ENCODE measurements at regions of chr4 and their contacts with region 1.

Region 1: DNA sequence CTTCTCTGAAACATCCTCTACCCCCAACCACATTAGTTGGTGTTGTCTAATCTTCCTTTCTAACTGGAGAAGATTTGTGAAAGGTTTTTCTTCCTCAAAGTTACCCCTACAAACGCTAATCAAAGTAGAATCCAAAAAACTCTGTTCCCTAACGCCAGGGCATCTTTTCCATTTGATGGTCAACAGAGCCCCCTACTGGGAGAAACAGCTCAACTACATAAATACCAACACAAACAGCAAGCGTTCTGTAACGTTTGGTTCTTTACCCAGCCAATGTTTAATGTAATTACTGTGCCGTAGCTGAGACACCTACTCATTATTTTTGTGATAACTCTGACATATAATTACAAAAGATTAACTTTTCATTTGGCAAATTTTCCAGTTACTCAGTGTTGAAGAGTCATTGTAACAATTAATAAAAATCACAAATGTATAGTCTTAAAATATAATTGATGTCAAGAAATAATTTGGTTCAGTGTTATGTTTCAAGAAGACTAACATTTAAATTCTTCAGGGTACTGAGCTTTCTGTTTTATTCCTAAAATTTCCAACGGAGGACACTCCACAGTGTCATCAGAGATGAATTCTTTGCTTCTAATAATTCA is 94.9 kb upstream of the TBC1D9 start:
- DNase-seq: peak; percentile 79
- H3K4me3 Mint-ChIP-seq: no peak overlapping the region
- H3K27ac Mint-ChIP-seq: no peak overlapping the region
- H3K4me1 Mint-ChIP-seq: peaks cover 15% of the 10 kb centered on the region
- H3K27me3 Mint-ChIP-seq: no peaks in the 10 kb centered on the region
- CTCF ChIP-seq: peak; percentile 82

Region 2: GRCh38 chr4:140523857-140524742 is 327.0 kb before region 1 on chr4 and contains the start of gene ELMOD2:
- CTCF ChIA-PET with region 1: interaction called, 3 read pairs
- POLR2A ChIA-PET with region 1: no interaction called
- intact Hi-C with region 1: loop called (anchors 5 kb)
- DNase-seq: peak; percentile 97
- H3K4me3 Mint-ChIP-seq: peak within 1 kb of the TSS; percentile 76
- H3K27ac Mint-ChIP-seq: peak within 1 kb of the TSS; percentile 47
- H3K4me1 Mint-ChIP-seq: no peaks in the 10 kb centered on the region
- H3K27me3 Mint-ChIP-seq: no peaks in the 10 kb centered on the region
- CTCF ChIP-seq: peak; percentile 84
- total RNA-seq, gene ELMOD2: 29.2 and 45.0 TPM in 2 replicates

Region 3: DNA sequence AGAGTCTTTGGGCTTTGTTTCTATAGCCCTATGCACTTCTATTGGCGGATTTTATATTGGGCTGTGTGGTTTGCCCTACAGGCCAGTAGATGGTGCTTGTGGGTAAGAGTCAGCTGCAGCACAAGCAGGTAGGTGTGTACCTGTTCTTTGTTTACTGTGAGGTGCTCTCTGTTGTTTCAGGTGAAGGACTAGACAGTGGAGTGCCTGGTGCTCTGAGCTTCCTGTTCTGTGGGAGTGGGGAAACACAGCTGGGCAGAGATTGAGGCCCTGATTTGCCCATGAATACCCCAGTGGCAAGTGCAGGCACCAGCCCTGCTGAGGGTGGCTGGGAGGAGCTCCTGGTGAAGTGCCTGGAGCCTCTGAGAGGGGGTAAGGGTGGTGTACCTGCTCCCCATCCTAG is 256.1 kb before region 1 on chr4:
- CTCF ChIA-PET with region 1: interaction called, 30 read pairs
- POLR2A ChIA-PET with region 1: interaction called, 3 read pairs
- intact Hi-C with region 1: loop called (anchors 1 kb)
- DNase-seq: peak; percentile 61
- H3K4me3 Mint-ChIP-seq: no peak overlapping the region
- H3K27ac Mint-ChIP-seq: no peak overlapping the region
- H3K4me1 Mint-ChIP-seq: no peaks in the 10 kb centered on the region
- H3K27me3 Mint-ChIP-seq: peaks cover 32% of the 10 kb centered on the region
- CTCF ChIP-seq: peak; percentile 70

Region 4: DNA sequence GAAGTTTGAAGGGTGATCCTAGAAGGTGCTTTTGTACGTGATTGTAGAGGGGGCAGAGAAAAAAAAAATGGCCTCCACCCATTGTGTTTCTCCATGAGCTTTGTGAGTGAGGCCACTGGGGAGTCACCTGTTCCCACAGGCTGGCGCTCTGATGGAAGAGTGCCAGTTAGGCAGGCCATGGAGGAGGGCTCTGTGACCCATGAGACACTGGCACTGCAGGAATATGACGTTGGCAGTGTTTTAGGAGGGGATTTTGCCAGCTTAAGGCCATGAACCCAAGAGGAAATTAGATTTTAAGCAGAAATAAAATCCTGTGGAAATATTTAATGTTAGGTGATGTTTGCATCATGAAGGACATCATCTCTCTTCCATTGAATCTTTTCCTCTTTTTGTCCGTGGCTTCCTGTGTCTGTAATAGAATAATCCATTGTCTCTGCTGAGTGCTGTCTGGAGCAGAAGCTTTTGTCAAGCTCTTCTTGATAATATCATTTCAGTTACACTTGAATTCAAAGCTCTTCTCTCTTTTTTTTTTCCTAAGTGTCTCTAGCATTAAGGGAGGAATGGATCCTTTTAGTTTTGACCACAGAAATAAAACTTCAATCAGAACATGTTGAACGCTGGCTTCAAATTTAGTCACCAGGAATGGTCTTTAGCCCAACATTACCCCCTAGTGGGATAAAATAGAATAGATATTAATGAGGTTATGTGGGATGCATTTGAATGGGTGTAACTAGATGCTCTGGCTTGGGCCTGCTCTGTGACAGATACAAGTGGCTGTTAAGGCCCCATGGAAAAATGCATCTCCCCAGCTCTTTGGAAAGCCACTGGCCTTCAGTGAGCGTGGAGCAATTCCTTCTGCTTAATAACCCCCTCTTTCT is 241.3 kb before region 1 on chr4:
- CTCF ChIA-PET with region 1: interaction called, 8 read pairs
- POLR2A ChIA-PET with region 1: no interaction called
- intact Hi-C with region 1: loop called (anchors 1 kb)
- DNase-seq: peak; percentile 66
- H3K4me3 Mint-ChIP-seq: no peak overlapping the region
- H3K27ac Mint-ChIP-seq: no peak overlapping the region
- H3K4me1 Mint-ChIP-seq: peaks cover 6% of the 10 kb centered on the region
- H3K27me3 Mint-ChIP-seq: no peaks in the 10 kb centered on the region
- CTCF ChIP-seq: peak; percentile 70

Region 5: GRCh38 chr4:140626661-140627376 is 224.3 kb before region 1 on chr4:
- CTCF ChIA-PET with region 1: interaction called, 11 read pairs
- POLR2A ChIA-PET with region 1: interaction called, 3 read pairs
- intact Hi-C with region 1: loop called (anchors 1 kb)
- DNase-seq: peak; percentile 25
- H3K4me3 Mint-ChIP-seq: no peak overlapping the region
- H3K27ac Mint-ChIP-seq: no peak overlapping the region
- H3K4me1 Mint-ChIP-seq: no peaks in the 10 kb centered on the region
- H3K27me3 Mint-ChIP-seq: no peaks in the 10 kb centered on the region
- CTCF ChIP-seq: no peak

Region 6: GRCh38 chr4:140743194-140743931 is 107.8 kb before region 1 on chr4:
- CTCF ChIA-PET with region 1: no interaction called
- POLR2A ChIA-PET with region 1: no interaction called
- intact Hi-C with region 1: loop called (anchors 2 kb)
- DNase-seq: peak; percentile 41
- H3K4me3 Mint-ChIP-seq: peak overlapping the region; percentile 58
- H3K27ac Mint-ChIP-seq: peak overlapping the region; percentile 96
- H3K4me1 Mint-ChIP-seq: peaks cover 35% of the 10 kb centered on the region
- H3K27me3 Mint-ChIP-seq: no peaks in the 10 kb centered on the region
- CTCF ChIP-seq: peak; percentile 27

Measured in MCF 10A (cell line).